WTC11 (cell line): ENCODE measurements at regions of chr12 and their contacts with region 1.

Region 1: DNA sequence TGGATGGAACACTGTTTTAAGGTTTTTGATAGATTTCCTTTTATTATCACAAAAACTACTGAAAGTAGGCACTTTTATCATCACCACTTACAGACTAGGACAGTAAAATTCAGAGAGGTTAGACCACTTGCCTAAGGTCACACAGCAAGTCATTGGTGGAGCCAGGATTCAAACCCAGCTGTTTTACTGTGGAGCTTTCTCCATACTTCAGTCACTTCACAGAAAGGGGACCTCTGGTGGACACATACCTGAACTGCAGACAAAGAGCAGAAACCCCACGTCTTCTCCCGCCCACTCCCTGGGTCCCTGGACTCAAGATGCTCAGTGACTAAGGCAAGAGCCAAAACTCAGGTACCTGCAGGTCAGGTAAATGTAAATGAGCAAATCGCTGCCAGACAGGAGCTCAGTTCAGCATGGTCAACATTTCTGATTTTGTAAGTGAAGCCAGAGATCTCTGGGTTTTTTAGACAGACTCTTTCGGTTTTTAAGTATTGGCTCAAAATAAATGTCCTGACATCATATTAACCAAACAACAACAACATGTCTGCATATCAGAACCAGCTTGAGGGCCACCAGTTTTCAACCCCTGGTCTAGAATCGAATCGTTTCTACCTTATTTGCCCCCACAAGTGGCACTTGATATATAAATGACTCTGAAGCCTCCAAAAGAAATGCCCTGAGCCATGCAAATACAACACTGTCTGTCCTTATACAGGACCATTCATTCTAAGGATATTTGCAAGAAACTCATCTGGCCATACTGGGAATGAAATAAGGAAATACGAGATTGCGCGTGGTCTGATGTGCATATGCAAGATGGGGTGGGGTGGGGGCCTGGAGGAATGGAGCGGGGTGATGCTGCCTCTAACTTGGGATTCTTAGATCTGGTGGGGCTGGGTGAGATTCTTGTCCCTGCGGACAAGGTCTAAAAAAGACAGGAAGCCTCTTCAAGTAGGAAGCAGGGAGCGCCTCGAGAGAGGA is 110.9 kb downstream of the KSR2 start:
- DNase-seq: peak; percentile 83
- ATAC-seq: peak; percentile 64
- H3K4me3 Mint-ChIP-seq: no peak overlapping the region
- H3K27ac Mint-ChIP-seq: no peak overlapping the region
- H3K4me1 Mint-ChIP-seq: 0 out of 2 replicates have a peak, but pooled peaks cover 2% of the 10 kb centered on the region
- H3K27me3 Mint-ChIP-seq: no peaks in the 10 kb centered on the region
- CTCF ChIP-seq: peak; percentile 80

Region 2: DNA sequence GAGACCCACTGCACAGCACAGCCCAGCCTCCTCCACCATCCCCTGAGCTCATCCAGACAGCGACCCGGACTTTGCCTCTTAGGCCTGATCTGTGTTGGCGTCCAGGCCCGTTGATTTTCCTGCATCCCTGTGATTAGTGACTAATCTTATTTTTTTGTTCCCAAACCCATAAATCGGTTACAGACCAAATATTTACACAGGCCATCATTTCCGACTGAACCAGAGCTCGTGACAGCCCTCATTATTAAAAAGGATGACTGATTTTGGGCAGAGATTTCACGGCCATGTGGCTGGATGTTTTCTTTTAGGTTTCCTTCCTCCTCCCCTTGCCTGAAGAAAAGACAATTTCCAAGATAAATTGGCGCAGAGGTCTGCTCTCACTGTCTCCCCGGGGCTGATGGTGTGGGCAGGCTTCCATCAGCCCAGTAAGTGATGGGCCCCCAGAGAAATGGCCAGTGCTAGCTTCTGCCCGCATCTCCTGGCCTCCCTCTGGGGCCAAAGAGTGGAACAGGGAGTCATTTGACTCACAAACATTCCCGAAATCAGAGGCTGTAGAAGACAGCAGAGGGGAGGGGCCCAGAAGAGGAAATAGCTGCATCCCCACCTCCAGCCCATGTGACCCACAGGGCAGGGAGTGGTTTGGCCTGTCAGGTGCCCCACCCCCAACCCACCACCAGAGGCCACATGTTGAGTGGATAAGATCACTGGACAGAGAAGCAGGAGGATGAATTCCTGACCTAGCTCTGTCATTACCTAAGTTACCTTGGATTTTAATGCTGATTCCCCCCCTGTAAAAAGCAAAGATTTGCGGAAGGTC is 172.6 kb before region 1 on chr12:
- CTCF ChIA-PET with region 1: interaction called, 11 read pairs
- POLR2A ChIA-PET with region 1: no interaction called
- DNase-seq: peak; percentile 85
- ATAC-seq: peak; percentile 100
- H3K4me3 Mint-ChIP-seq: peak overlapping the region; percentile 43
- H3K27ac Mint-ChIP-seq: peak overlapping the region; percentile 98
- H3K4me1 Mint-ChIP-seq: peaks cover 20% of the 10 kb centered on the region
- H3K27me3 Mint-ChIP-seq: no peaks in the 10 kb centered on the region
- CTCF ChIP-seq: no peak

Region 3: GRCh38 chr12:117742721-117743120 is 115.2 kb before region 1 on chr12:
- CTCF ChIA-PET with region 1: no interaction called
- POLR2A ChIA-PET with region 1: no interaction called
- DNase-seq: no peak
- ATAC-seq: no peak
- H3K4me3 Mint-ChIP-seq: no peak overlapping the region
- H3K27ac Mint-ChIP-seq: no peak overlapping the region
- H3K4me1 Mint-ChIP-seq: peaks cover 5% of the 10 kb centered on the region
- H3K27me3 Mint-ChIP-seq: no peaks in the 10 kb centered on the region
- CTCF ChIP-seq: no peak

Region 4: GRCh38 chr12:117760990-117761389 is 96.9 kb before region 1 on chr12:
- CTCF ChIA-PET with region 1: no interaction called
- POLR2A ChIA-PET with region 1: no interaction called
- DNase-seq: no peak
- ATAC-seq: no peak
- H3K4me3 Mint-ChIP-seq: no peak overlapping the region
- H3K27ac Mint-ChIP-seq: no peak overlapping the region
- H3K4me1 Mint-ChIP-seq: no peaks in the 10 kb centered on the region
- H3K27me3 Mint-ChIP-seq: peaks cover 5% of the 10 kb centered on the region; the same call in 1 of the 2 replicates
- CTCF ChIP-seq: no peak

Region 5: DNA sequence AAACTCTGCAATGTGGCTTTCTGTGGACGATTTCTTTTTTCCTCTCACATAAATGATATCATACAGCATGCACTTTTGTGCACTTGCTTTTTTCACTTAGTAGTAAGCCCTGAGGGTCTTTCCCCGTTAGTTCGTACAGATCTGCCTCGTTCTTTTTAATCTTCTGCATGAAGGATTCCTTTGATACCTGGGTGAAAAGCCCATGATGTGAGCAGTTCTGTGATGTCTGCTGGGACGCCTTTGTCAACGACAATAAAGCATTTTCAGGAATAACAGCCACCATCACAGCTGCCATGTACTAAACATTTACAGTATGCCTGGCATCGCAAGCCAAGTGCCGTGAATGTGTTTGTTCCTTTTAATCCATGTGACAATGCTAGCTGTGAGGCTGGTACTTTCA is 11.6 kb after region 1 on chr12:
- CTCF ChIA-PET with region 1: interaction called, 20 read pairs
- POLR2A ChIA-PET with region 1: no interaction called
- DNase-seq: no peak
- ATAC-seq: no peak
- H3K4me3 Mint-ChIP-seq: no peak overlapping the region
- H3K27ac Mint-ChIP-seq: no peak overlapping the region
- H3K4me1 Mint-ChIP-seq: no peaks in the 10 kb centered on the region
- H3K27me3 Mint-ChIP-seq: no peaks in the 10 kb centered on the region
- CTCF ChIP-seq: no peak

Region 6: DNA sequence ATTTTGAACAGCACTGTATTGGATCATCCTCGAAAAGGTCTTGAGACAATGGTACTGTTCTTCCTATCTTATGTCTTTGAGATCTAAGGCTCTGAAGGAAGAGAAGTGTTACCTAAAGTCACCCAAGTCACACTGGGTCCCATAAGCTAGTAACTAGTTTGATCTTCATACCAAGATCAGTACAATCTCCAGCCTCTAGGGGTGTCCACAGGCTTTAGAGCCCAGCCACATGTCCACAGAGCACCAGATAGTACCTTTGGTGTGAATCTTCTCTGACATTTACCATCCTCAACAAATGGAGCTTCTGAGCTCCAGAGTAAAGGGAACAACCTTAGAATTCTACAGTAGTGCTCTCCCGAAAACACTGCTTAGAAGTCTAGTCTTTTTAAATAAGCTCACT is 32.2 kb after region 1 on chr12:
- CTCF ChIA-PET with region 1: interaction called, 10 read pairs
- POLR2A ChIA-PET with region 1: no interaction called
- DNase-seq: no peak
- ATAC-seq: peak; percentile 87
- H3K4me3 Mint-ChIP-seq: no peak overlapping the region
- H3K27ac Mint-ChIP-seq: no peak overlapping the region
- H3K4me1 Mint-ChIP-seq: no peaks in the 10 kb centered on the region
- H3K27me3 Mint-ChIP-seq: no peaks in the 10 kb centered on the region
- CTCF ChIP-seq: no peak